ENCODE measurements at regions of chr13 and their contacts with region 1.

Region 1: DNA sequence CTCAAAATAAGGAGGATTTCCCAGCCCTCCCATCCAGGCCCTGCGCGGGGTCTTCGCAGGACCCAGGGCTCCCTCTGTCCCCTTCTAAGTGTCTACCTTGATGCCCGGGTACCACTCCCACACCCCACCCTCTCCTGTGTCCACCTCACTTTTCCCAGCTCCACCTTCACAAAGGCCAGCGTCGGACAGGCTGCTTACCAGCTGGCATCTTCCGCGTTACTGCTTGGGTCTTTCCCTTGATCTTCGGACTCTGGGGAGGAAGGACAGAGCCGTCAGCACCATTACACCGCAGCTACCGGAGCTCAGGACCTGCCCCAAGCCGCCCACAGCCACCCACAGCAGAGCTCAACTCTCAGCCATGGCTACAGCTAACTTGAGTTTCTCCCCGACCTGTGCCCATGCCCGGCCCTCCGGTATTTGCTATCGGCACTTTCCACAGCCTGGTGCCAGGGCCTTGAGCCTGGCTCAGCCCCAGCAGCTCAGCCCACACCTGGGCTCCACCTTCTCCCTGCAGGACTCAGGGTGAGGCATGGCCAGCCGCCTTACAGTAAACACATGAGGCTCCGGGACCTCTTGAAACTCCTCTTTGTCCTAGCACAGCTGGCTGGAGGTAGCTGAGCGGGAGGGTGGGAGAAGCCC is 3.8 kb downstream of the C13orf46 start:
- DNase-seq: peak; percentile 51
- H3K4me3 ChIP-seq: peak overlapping the region in 1 of 3 experiments; percentile 24
- H3K27ac ChIP-seq: no peak overlapping the region
- H3K4me1 ChIP-seq: peaks cover 21% of the 10 kb centered on the region
- H3K27me3 ChIP-seq: no peaks in the 10 kb centered on the region
- CTCF ChIP-seq: no peak

Region 2: GRCh38 chr13:114010401-114011101 is 40.5 kb after region 1 on chr13:
- CTCF ChIA-PET with region 1: no interaction called
- dilution Hi-C with region 1: loop called (anchors 5 kb)
- in situ Hi-C with region 1: no loop called
- intact Hi-C with region 1: no loop called
- DNase-seq: no peak
- H3K4me3 ChIP-seq: no peak overlapping the region
- H3K27ac ChIP-seq: no peak overlapping the region
- H3K4me1 ChIP-seq: peaks cover 7% of the 10 kb centered on the region
- H3K27me3 ChIP-seq: no peaks in the 10 kb centered on the region
- CTCF ChIP-seq: no peak

Measured in mammary epithelial cell (primary cell).